Upper lobe of right lung (tissue), 1 donor: ENCODE measurements at regions of chr4 and their contacts with region 1.

Region 1: DNA sequence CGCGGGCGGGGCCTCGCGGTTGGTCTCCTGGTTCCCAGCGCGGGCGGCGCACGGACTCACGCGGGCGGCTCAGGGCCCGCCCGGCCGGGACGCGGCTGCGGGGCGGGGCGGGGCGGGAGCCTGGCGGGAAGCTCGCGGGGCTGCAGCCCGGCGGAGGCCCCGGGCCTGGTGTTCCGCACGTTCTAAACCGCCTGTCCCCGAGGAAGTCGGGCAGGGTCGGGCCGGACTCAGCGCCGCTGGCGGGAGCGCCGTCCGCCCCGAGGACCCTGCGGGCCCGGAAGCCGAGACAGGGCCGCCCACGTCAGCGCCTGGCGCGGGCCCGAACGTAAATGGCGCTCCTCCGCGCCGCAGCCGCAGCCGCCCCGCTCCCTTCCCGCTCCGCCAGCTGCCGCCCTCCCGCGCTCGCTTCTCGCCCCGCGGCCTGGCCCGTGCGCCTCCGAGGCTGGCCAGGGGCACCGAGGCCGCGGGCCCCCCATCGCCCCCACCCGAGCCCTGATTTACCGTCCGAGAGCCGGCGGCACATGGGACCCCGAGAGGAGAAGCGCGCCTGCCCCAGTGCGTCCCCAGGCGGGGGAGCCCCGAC is 309 bp upstream of the CTBP1 start:
- DNase-seq: peak; percentile 94
- ATAC-seq: peak; percentile 73
- H3K4me3 ChIP-seq: peak overlapping the region; percentile 72
- H3K27ac ChIP-seq: peak overlapping the region; percentile 96
- H3K4me1 ChIP-seq: peaks cover 57% of the 10 kb centered on the region
- H3K27me3 ChIP-seq: no peaks in the 10 kb centered on the region
- CTCF ChIP-seq: no peak

Region 2: DNA sequence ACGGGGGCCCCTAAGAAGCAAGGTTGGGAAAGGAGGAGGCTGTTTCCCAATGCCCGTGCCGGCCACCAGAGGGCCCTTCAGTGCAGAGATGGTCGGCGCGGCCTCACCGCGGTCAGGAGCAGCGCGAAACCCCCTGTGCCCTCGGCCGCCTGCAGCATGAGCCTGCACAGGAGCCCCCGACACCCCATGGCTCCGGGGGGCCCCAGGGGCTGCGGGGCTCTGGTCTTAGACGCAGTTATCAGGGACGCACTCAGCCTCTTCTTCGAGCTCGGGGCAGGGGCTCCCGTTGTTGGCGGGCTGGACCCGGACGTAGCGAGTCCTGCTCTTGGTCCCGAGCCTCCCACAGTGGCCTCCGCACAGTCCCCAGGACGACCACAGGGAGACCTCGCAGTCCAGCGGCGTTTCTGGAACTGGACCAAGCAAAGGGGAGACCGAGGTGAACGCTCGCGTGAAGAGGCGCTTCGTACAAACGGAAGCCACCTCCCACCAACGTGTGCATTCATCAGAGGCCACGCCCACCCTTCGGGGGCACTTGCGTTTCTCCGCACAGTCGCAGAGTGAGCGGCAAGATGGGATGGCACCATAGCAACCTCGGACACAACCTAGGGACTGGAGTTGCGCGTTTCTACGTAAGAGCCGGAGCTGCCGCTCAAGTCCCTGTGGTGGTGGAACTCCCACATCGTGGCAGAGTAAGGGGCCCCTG is 81.8 kb before region 1 on chr4:
- intact Hi-C with region 1: loop called (anchors 10 kb)
- DNase-seq: peak; percentile 92
- ATAC-seq: peak; percentile 86
- H3K4me3 ChIP-seq: peak overlapping the region; percentile 71
- H3K27ac ChIP-seq: no peak overlapping the region
- H3K4me1 ChIP-seq: peaks cover 26% of the 10 kb centered on the region
- H3K27me3 ChIP-seq: peaks cover 28% of the 10 kb centered on the region
- CTCF ChIP-seq: peak; percentile 93

Region 3: DNA sequence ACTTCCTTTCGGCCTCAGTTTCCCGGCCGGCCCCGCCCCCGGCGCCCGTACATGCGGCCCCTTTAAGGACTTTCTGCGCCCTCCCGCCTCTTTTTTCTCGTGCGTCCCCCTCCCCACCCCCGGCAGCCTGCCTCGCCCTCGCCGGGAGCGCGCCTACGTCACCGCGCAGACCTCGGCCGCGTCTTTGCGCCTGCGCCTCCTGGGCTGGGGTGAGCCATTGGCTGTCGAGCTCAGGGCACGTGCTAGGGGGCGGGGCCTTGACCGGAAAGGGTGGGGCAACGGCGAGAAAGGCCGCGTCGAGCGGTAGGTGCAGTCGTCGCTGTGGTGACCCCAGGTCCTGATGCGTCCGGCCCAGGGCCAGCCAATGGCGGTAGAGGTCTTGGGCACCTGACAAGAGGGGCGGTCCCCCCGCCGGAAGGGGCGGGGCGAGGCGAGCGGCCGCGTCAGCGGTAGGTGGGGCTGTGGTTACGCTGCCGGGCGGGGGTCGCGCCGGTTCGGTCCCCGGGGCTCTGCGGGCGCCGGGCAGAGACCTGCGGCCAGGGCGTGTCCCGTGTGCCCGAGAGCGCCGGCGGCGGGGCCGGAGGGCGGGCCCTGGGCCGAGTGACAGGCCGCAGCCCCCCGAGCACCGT is 97.7 kb after region 1 on chr4 and contains the start of gene UVSSA:
- intact Hi-C with region 1: loop called (anchors 10 kb)
- DNase-seq: peak; percentile 100
- ATAC-seq: peak; percentile 94
- H3K4me3 ChIP-seq: peak within 1 kb of the TSS; percentile 87
- H3K27ac ChIP-seq: peak within 1 kb of the TSS; percentile 98
- H3K4me1 ChIP-seq: peaks cover 31% of the 10 kb centered on the region
- H3K27me3 ChIP-seq: no peaks in the 10 kb centered on the region
- CTCF ChIP-seq: no peak
- total RNA-seq, gene UVSSA: 28.3 TPM